CD8-positive, alpha-beta memory T cell (primary cell): ENCODE measurements at regions of chr9 and their contacts with region 1.

Region 1: DNA sequence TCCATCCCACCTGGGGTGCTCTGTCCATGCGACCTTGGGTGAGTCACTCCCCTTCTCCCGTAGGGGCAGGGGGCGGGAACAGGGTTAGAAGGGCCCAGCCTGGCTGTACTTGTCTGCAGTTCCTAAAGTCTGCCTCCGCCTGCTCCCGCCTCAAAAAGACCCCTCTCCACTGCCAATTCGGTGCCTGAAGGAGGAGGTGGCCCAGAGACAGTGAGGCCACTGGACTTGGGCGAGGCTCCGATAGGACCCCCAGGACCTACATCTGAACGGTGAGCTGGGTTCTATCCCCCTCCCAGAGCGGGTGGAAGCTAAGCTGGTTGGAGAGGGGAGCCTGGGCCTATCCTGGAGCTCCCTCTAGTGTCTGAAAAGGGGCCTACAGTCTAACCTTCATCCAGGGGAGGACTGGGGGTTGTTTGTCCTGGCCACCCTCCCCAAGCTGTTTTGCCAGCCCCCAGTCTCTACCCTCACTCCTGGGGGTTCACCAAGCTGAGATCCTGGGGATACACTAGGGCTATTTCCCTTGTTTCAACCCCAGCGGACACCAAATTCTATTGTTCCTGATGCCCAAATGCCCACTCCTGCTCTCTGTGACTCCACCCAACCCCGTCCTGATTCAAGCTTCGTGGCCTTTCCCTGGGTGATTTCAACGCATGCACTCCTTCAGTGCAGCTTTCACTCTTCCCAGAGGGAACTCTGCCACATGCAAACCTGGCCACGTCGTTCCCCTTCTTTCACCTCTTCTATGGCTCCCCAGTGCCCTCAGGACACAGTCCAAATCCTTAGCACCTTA is 6.1 kb upstream of the CRB2 start:
- DNase-seq: peak; percentile 37 to 69 (median 52)
- H3K4me3 ChIP-seq: no peak overlapping the region
- H3K4me3 Mint-ChIP-seq: no peak overlapping the region
- H3K27ac ChIP-seq: no peak overlapping the region
- H3K27ac Mint-ChIP-seq: peak overlapping the region in 1 of 8 donors; percentile 29
- H3K4me1 ChIP-seq: peaks cover 6% of the 10 kb centered on the region
- H3K4me1 Mint-ChIP-seq: peaks cover 0 to 3% (median 2%) of the 10 kb centered on the region in 3 donors
- H3K27me3 ChIP-seq: no peaks in the 10 kb centered on the region
- H3K27me3 Mint-ChIP-seq: peaks cover 8 to 18% of the 10 kb centered on the region in 2 donors

Region 2: GRCh38 chr9:123081824-123082223 is 268.1 kb before region 1 on chr9:
- CTCF ChIA-PET with region 1: interaction called, 22 read pairs
- POLR2A ChIA-PET with region 1: no interaction called
- DNase-seq: peak in 2 of 5 donors; percentile 7 to 11
- H3K4me3 ChIP-seq: no peak overlapping the region
- H3K4me3 Mint-ChIP-seq: no peak overlapping the region
- H3K27ac ChIP-seq: no peak overlapping the region
- H3K27ac Mint-ChIP-seq: no peak overlapping the region
- H3K4me1 ChIP-seq: no peaks in the 10 kb centered on the region
- H3K4me1 Mint-ChIP-seq: no peaks in the 10 kb centered on the region
- H3K27me3 ChIP-seq: no peaks in the 10 kb centered on the region
- H3K27me3 Mint-ChIP-seq: no peaks in the 10 kb centered on the region

Region 3: DNA sequence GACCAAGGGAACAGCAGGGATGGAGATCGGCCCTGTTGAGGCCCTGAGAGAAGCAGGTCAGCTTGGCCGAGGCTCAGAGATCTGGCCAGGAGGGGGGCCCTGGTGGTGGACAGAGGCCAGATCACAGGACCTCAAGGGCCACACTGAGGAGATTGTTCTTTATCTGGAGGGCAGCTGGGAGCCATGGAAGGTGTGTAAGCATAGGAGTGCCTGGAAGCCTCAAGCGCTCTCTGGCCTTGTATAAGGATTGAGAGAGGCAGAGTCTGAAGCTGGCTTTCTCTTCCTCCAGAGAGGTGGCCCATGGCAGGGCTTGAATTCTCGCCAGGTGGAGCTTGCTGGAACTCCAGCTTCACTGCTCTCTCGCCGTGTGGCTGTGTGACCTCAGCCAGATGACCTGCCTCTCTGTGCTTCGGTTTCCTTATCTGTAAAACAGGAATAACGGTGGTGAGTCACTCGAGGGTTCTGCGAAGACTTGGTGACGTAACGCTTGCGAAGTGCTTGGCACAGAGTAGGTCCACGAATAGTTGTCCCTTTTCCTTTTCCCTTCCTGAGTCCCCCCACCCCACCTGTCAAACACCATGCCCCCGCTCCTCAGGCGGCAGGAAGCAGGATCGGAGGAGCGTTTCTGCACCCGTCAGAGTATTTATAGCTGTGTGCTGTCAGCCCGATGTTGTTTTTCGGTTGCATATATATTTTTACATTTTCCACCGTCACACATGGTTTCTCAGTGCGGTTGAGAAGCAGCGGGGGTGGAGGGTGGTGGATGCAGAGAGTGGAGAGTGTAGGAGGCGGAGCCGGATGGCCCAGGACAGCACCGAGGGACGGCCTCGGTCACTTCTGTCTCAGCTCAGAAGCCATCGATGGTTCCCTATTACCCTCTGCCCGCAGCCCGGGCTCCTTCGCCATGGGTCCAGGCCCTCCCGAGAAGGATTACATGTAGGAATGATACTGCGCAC is 10.9 kb before region 1 on chr9:
- CTCF ChIA-PET with region 1: interaction called, 14 read pairs
- POLR2A ChIA-PET with region 1: interaction called, 3 read pairs
- DNase-seq: peak; percentile 14 to 71 (median 34)
- H3K4me3 ChIP-seq: peak overlapping the region; percentile 67
- H3K4me3 Mint-ChIP-seq: peak overlapping the region; percentile 86 to 93 (median 90)
- H3K27ac ChIP-seq: peak overlapping the region; percentile 81
- H3K27ac Mint-ChIP-seq: peak overlapping the region; percentile 55 to 91 (median 84)
- H3K4me1 ChIP-seq: peaks cover 24% of the 10 kb centered on the region
- H3K4me1 Mint-ChIP-seq: peaks cover 28 to 30% (median 30%) of the 10 kb centered on the region in 3 donors
- H3K27me3 ChIP-seq: no peaks in the 10 kb centered on the region
- H3K27me3 Mint-ChIP-seq: peaks cover 0 to 6% of the 10 kb centered on the region in 2 donors

Region 4: GRCh38 chr9:123360161-123361085 is 10.5 kb after region 1 on chr9:
- CTCF ChIA-PET with region 1: interaction called, 12 read pairs
- POLR2A ChIA-PET with region 1: no interaction called
- DNase-seq: peak in 2 of 5 donors; percentile 34 to 63
- H3K4me3 ChIP-seq: no peak overlapping the region
- H3K4me3 Mint-ChIP-seq: no peak overlapping the region
- H3K27ac ChIP-seq: peak overlapping the region; percentile 48
- H3K27ac Mint-ChIP-seq: no peak overlapping the region
- H3K4me1 ChIP-seq: peaks cover 12% of the 10 kb centered on the region
- H3K4me1 Mint-ChIP-seq: peaks cover 5 to 20% (median 12%) of the 10 kb centered on the region in 3 donors
- H3K27me3 ChIP-seq: no peaks in the 10 kb centered on the region
- H3K27me3 Mint-ChIP-seq: peaks cover 1 to 8% of the 10 kb centered on the region in 2 donors

Region 5: DNA sequence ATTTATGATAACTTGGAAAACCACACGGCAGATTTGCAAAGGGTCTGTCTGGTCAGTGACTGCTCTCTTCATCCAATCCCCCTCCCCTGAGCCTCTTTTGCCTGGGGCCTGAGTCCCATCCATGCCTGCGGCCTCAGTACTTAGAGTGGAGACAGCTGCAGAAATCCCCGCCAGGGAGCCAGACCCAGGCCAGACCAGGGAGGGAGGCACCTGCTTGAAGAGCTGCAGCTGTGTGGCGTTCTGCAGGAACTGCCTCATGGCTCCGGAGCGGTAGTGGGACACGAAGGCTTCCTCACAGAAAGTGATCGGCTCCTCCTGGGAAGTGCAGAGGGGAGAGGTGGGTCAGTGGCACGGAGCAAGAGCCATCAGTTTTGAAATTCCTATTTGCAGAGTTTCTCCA is 107.7 kb after region 1 on chr9:
- CTCF ChIA-PET with region 1: no interaction called
- POLR2A ChIA-PET with region 1: no interaction called
- DNase-seq: no peak
- H3K4me3 ChIP-seq: no peak overlapping the region
- H3K4me3 Mint-ChIP-seq: no peak overlapping the region
- H3K27ac ChIP-seq: no peak overlapping the region
- H3K27ac Mint-ChIP-seq: peak overlapping the region in 1 of 8 donors; percentile 34
- H3K4me1 ChIP-seq: no peaks in the 10 kb centered on the region
- H3K4me1 Mint-ChIP-seq: no peaks in the 10 kb centered on the region
- H3K27me3 ChIP-seq: no peaks in the 10 kb centered on the region
- H3K27me3 Mint-ChIP-seq: no peaks in the 10 kb centered on the region

Region 6: GRCh38 chr9:123478967-123479602 is 129.2 kb after region 1 on chr9:
- CTCF ChIA-PET with region 1: no interaction called
- POLR2A ChIA-PET with region 1: no interaction called
- DNase-seq: no peak
- H3K4me3 ChIP-seq: no peak overlapping the region
- H3K4me3 Mint-ChIP-seq: no peak overlapping the region
- H3K27ac ChIP-seq: no peak overlapping the region
- H3K27ac Mint-ChIP-seq: no peak overlapping the region
- H3K4me1 ChIP-seq: no peaks in the 10 kb centered on the region
- H3K4me1 Mint-ChIP-seq: no peaks in the 10 kb centered on the region
- H3K27me3 ChIP-seq: no peaks in the 10 kb centered on the region
- H3K27me3 Mint-ChIP-seq: no peaks in the 10 kb centered on the region

Region 7: GRCh38 chr9:123975871-123976270 is 626.0 kb after region 1 on chr9:
- CTCF ChIA-PET with region 1: no interaction called
- POLR2A ChIA-PET with region 1: no interaction called
- DNase-seq: no peak
- H3K4me3 ChIP-seq: no peak overlapping the region
- H3K4me3 Mint-ChIP-seq: no peak overlapping the region
- H3K27ac ChIP-seq: no peak overlapping the region
- H3K27ac Mint-ChIP-seq: no peak overlapping the region
- H3K4me1 ChIP-seq: no peaks in the 10 kb centered on the region
- H3K4me1 Mint-ChIP-seq: no peaks in the 10 kb centered on the region
- H3K27me3 ChIP-seq: no peaks in the 10 kb centered on the region
- H3K27me3 Mint-ChIP-seq: peaks cover 10 to 23% of the 10 kb centered on the region in 2 donors